Psoas muscle (tissue), 8 donors: ENCODE measurements at regions of chr4 and their contacts with region 1.

Region 1: DNA sequence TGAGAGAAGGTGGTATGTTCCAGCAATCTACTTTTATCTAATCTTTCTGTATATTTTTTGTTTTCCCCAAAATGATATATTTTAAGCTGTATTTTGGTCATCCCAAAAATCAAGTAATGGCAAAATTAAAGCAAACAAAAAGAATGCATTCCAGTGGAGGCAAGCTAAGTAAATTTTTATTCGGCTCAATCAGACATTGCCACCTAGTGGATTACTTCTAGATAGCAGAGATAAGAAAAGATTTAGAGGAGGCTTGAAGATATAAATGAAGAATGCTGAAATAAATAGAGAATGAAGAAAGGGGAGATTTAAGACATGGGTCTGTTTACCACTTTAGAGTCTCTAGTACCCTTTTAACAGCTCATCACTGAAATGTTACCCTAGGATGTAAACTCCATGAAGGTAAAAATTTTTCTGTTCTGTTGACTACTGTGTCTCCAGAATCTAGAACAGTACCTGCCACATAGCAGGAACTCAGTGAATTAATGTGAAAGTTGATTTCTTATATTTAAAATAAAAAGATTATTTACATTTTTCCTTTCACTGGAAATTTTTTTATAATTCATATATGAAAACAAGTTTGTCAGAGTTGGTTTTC is 110.9 kb upstream of the ANK2 start:
- DNase-seq: no peak
- ATAC-seq: peak in 1 of 4 donors; percentile 56
- H3K4me3 ChIP-seq: no peak overlapping the region
- H3K27ac ChIP-seq: no peak overlapping the region
- H3K4me1 ChIP-seq: no peaks in the 10 kb centered on the region
- H3K27me3 ChIP-seq: no peaks in the 10 kb centered on the region
- CTCF ChIP-seq: peak; percentile 72

Region 2: DNA sequence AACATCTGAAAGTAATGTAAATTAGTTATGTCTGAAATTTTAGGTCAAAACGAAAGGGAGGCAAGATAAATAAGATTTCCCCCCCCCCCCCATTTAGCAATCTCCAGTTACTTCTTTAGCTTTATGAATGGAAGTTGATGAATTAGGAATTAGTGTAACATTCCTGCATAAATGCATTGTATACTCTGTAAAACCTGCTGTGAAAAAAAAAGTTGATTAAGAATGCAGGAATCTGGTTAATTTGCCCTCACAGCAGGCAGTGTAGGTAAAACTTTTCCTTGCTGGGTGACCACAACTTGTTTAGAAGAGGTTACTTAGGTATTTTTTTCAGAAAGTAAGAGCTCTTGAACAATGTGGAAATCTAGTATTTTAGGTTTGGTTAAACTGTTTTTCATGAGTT is 286.3 kb before region 1 on chr4:
- intact Hi-C with region 1: no loop called
- DNase-seq: no peak
- ATAC-seq: no peak
- H3K4me3 ChIP-seq: no peak overlapping the region
- H3K27ac ChIP-seq: no peak overlapping the region
- H3K4me1 ChIP-seq: no peaks in the 10 kb centered on the region
- H3K27me3 ChIP-seq: no peaks in the 10 kb centered on the region
- CTCF ChIP-seq: no peak

Region 3: DNA sequence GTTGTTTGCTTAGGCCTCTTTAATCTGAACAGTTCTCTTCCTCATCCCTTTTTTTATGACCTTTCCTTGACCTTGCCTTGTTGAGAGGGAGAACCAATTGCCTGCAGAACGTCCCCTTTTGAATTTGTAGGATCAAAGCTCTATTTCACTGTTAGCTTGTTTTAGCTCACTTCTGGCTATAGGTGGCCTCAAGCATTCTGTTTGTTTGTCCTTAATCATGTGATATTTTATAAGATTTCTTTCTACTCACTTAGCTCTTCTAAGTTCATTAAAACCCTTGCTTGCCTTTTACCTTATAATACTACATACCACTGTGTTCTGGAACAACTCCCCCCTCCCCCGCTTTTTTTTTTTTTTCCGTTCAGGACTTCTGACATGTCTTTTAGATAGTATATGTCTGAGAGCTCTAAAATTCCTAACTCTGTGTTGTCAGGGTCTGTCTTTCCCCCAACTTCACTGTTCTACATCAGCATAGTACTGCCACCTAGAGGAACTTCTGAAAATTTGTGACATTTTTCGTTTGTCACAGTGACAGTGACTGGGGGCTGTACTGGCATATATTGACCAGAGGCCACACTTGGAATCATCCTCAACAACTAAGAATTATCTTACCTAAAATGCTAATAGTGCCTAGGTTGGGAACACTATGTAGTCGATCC is 173.1 kb before region 1 on chr4:
- intact Hi-C with region 1: loop called in 1 of 2 experiments (anchors 5 kb)
- DNase-seq: no peak
- ATAC-seq: peak; percentile 46 to 84 (median 67)
- H3K4me3 ChIP-seq: no peak overlapping the region
- H3K27ac ChIP-seq: no peak overlapping the region
- H3K4me1 ChIP-seq: peaks cover 4% of the 10 kb centered on the region
- H3K27me3 ChIP-seq: no peaks in the 10 kb centered on the region
- CTCF ChIP-seq: peak; percentile 56

Region 4: DNA sequence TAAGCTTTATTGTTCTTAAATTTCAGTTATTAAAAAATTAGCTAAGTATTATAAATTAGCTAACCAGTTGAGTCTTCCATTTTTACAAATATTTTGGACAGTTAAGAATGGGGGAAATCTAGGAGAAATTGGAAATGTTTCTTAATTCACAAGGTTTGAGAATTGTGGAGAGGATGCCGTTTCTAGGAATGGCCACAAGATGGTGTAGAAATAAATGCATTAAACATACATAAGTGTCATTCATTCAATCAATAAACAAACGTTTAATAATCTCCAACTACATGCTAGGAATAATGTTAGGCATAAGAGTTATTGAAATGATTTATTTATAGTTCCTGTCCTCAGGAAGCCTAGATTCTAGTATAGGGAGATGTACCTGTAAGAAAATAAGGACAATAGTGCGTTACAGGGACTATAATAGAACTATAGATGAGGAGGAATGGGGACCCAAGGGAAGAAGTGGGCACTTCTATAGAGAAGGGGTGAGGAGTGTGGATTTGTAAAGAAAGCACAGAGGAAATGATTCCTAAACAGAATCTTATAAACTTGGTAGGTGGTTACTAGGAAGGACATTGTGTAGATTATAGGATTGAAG is 84.8 kb before region 1 on chr4:
- intact Hi-C with region 1: loop called in 1 of 2 experiments (anchors 5 kb)
- DNase-seq: no peak
- ATAC-seq: no peak
- H3K4me3 ChIP-seq: no peak overlapping the region
- H3K27ac ChIP-seq: no peak overlapping the region
- H3K4me1 ChIP-seq: peaks cover 17% of the 10 kb centered on the region
- H3K27me3 ChIP-seq: no peaks in the 10 kb centered on the region
- CTCF ChIP-seq: peak; percentile 23

Region 5: GRCh38 chr4:113077575-113077974 is 139.0 kb after region 1 on chr4:
- intact Hi-C with region 1: loop called in 1 of 2 experiments (anchors 10 kb)
- DNase-seq: no peak
- ATAC-seq: no peak
- H3K4me3 ChIP-seq: no peak overlapping the region
- H3K27ac ChIP-seq: no peak overlapping the region
- H3K4me1 ChIP-seq: no peaks in the 10 kb centered on the region
- H3K27me3 ChIP-seq: no peaks in the 10 kb centered on the region
- CTCF ChIP-seq: no peak